MCF 10A (cell line): ENCODE measurements at regions of chr14 and their contacts with region 1.

Region 1: DNA sequence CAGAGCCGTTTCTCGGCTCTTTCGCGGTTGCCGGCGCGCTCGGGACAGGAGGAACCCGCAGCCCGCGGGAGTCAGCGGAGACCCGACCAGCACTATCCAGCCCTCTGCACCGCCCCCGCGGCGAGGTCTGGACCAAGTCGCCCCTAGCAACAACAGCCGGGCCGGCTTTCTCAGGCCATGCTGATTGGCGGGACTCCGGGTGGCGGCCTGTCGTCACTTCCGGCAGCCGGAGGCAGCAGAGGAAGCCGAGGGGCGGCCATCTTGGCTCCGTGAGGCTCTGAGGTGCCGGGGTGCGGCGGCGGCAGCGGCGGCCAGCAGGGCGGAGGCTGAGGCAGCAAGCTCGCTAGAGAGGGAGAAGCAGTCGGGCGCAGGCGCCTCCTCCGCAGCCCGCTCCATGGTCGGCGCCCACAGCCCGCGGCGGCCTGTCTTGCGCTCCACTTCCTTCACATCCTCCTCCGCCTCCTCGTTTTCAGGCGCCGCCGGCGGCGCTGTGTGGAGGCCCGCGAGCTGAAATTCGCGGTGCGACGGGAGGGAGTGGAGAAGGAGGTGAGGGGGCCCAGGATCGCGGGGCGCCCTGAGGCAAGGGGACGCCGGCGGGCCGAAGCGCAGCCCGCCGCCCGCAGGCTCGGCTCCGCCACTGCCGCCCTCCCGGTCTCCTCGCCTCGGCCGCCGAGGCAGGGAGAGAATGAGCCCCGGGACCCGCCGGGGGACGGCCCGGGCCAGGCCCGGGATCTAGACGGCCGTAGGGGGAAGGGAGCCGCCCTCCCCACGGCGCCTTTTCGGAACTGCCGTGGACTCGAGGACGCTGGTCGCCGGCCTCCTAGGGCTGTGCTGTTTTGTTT is at the start of gene MARK3:
- DNase-seq: peak; percentile 95
- H3K4me3 Mint-ChIP-seq: peak within 1 kb of the TSS; percentile 91
- H3K27ac Mint-ChIP-seq: peak within 1 kb of the TSS; percentile 87
- H3K4me1 Mint-ChIP-seq: peaks cover 24% of the 10 kb centered on the region
- H3K27me3 Mint-ChIP-seq: no peaks in the 10 kb centered on the region
- CTCF ChIP-seq: no peak
- total RNA-seq, gene MARK3: 102 and 130 TPM in 2 replicates

Region 2: DNA sequence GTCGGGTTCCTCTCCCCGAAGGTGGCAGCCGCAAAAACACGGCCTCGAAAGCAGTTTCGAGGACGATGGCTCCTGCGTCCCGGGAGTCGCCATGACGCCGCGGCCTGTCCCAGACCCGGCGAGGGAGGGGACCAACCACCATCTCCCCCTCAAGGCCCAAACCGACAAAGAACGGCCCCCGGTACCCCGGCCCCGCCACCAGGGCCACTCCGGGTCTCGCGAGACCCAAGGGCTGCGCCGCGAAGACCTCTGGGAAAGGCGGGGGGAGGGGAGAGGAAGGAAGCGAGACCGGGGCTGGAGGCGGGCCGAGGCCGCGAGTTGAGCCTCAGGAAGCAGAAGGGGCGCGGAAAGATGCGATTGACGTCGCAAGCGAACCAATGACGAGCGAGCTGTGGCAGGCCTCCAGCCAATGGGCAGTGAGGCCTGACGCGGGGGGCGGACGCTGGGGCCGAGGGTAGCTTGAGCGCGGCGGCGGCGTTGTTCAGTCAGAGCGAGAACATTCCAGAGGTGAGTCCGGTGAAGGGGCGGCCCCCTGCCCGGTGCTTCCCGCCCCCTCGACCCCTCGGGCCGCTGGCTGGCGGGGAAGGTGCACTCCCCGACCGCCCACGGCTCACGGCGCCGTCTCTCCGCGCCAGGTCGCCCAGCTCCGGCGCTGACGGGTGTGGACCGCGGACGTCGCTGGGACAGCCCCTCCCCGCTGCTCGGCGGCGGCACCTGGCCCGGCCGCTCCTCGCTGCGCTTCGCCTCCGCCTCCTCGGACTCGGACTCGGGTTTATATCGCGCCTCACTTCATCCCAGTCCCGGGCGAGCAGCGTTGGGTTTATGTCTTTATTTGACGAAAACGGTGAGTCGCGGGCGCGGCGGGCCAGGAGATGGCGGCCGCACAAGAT is 51.4 kb before region 1 on chr14 and contains the start of gene EIF5:
- CTCF ChIA-PET with region 1: interaction called, 36 read pairs
- POLR2A ChIA-PET with region 1: interaction called, 46 read pairs
- intact Hi-C with region 1: loop called (anchors 2 kb)
- DNase-seq: peak; percentile 98
- H3K4me3 Mint-ChIP-seq: peak within 1 kb of the TSS; percentile 89
- H3K27ac Mint-ChIP-seq: peak within 1 kb of the TSS; percentile 97
- H3K4me1 Mint-ChIP-seq: peaks cover 15% of the 10 kb centered on the region
- H3K27me3 Mint-ChIP-seq: no peaks in the 10 kb centered on the region
- CTCF ChIP-seq: peak; percentile 13
- total RNA-seq, gene EIF5: 149 and 327 TPM in 2 replicates

Region 3: GRCh38 chr14:103372603-103373304 is 12.6 kb before region 1 on chr14:
- CTCF ChIA-PET with region 1: interaction called, 10 read pairs
- POLR2A ChIA-PET with region 1: interaction called, 12 read pairs
- intact Hi-C with region 1: no loop called
- DNase-seq: peak; percentile 91
- H3K4me3 Mint-ChIP-seq: peak overlapping the region; percentile 4
- H3K27ac Mint-ChIP-seq: peak overlapping the region; percentile 64
- H3K4me1 Mint-ChIP-seq: peaks cover 10% of the 10 kb centered on the region
- H3K27me3 Mint-ChIP-seq: no peaks in the 10 kb centered on the region
- CTCF ChIP-seq: no peak

Region 4: DNA sequence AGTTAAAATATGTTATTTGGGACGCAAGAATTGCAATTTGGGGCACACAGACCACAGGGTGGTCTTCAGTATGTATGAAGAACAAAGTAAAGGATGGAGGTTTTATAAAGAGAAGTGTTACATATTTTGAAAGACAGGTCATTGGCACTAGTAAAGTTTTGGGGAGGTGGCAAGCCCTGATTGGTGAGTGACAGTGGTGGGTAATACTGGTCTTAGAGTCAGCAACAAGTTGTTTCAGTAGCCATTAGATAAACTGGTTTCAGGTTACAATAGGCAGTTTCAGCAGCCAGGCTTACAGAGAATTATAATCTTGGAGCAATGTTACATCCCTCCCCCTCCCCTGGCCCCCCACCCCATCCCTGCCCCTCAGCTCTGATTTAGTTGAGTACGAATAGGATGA is 17.3 kb after region 1 on chr14:
- CTCF ChIA-PET with region 1: interaction called, 38 read pairs
- POLR2A ChIA-PET with region 1: interaction called, 27 read pairs
- intact Hi-C with region 1: no loop called
- DNase-seq: peak; percentile 47
- H3K4me3 Mint-ChIP-seq: no peak overlapping the region
- H3K27ac Mint-ChIP-seq: no peak overlapping the region
- H3K4me1 Mint-ChIP-seq: peaks cover 44% of the 10 kb centered on the region
- H3K27me3 Mint-ChIP-seq: no peaks in the 10 kb centered on the region
- CTCF ChIP-seq: no peak